CD4-positive, alpha-beta T cell (primary cell): ENCODE measurements at regions of chr19 and their contacts with region 1.

Region 1: DNA sequence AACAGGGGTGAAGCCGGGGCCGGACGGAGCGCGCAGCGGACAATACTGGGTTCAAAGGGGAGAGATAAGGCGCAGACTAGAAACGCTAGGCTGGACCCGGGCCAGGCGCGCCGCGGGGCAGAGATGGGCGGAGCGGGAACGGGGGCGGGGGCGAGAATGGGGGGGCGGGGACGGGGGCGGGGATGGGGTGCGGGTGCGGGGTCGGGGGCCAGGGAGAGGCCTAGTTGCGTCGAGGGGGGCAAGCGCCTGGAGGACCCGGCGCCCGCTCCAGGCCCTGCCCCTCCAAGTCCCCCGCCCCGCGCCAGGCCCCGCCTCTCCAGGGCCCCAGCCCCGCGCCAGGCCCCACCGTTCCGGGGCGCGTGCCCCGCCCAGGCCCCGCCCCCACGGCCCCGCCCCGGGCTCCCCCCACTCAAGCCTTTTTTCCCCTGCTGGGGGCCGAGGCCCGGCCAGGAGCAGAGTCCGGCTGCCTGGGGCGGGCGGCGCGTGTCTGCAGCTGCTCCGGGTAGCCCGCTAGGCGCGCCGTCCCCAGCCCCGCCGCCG is at the start of gene CERS4:
- DNase-seq: peak; percentile 54 to 92 (median 73)
- ATAC-seq: peak; percentile 83
- H3K4me3 ChIP-seq: peak within 1 kb of the TSS; percentile 95
- H3K4me3 Mint-ChIP-seq: peak within 1 kb of the TSS; percentile 93
- H3K27ac ChIP-seq: peak within 1 kb of the TSS; percentile 18 to 81
- H3K27ac Mint-ChIP-seq: peak within 1 kb of the TSS; percentile 90
- H3K4me1 ChIP-seq: peaks cover 39% of the 10 kb centered on the region
- H3K4me1 Mint-ChIP-seq: peaks cover 21% of the 10 kb centered on the region
- H3K27me3 ChIP-seq: no peaks in the 10 kb centered on the region
- H3K27me3 Mint-ChIP-seq: no peaks in the 10 kb centered on the region
- CTCF ChIP-seq: no peak
- total RNA-seq, gene CERS4: 8.7 to 12.3 TPM

Region 2: DNA sequence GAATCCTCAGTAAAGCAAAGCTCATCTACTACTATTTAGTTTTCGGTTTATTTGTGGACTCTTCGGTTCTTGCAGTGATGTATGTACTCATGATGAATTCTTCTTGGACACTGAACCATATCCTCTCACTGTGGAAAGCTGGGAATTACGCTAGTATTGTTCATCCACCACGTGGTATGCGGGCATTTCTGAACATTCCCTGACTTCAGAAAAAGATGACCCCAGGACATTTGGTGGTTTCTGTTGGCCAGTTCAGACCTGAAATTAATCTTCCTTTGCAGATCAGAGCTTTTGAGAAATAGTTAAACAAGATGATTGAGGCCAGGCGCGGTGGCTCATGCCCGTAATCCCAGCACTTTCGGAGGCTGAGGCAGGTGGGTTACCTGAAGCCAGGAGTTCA is 34.3 kb before region 1 on chr19:
- CTCF ChIA-PET with region 1: no interaction called
- POLR2A ChIA-PET with region 1: interaction called, 3 read pairs
- intact Hi-C with region 1: loop called in 1 of 2 experiments (anchors 5 kb)
- DNase-seq: no peak
- ATAC-seq: no peak
- H3K4me3 ChIP-seq: no peak overlapping the region
- H3K4me3 Mint-ChIP-seq: no peak overlapping the region
- H3K27ac ChIP-seq: no peak overlapping the region
- H3K27ac Mint-ChIP-seq: no peak overlapping the region
- H3K4me1 ChIP-seq: peaks cover 1% of the 10 kb centered on the region
- H3K4me1 Mint-ChIP-seq: no peaks in the 10 kb centered on the region
- H3K27me3 ChIP-seq: no peaks in the 10 kb centered on the region
- H3K27me3 Mint-ChIP-seq: no peaks in the 10 kb centered on the region
- CTCF ChIP-seq: no peak

Region 3: GRCh38 chr19:8180061-8180460 is 28.9 kb before region 1 on chr19:
- CTCF ChIA-PET with region 1: no interaction called
- POLR2A ChIA-PET with region 1: interaction called, 6 read pairs
- intact Hi-C with region 1: loop called (anchors 1 to 5 kb)
- DNase-seq: no peak
- ATAC-seq: no peak
- H3K4me3 ChIP-seq: no peak overlapping the region
- H3K4me3 Mint-ChIP-seq: no peak overlapping the region
- H3K27ac ChIP-seq: no peak overlapping the region
- H3K27ac Mint-ChIP-seq: no peak overlapping the region
- H3K4me1 ChIP-seq: peaks cover 26% of the 10 kb centered on the region
- H3K4me1 Mint-ChIP-seq: peaks cover 7% of the 10 kb centered on the region
- H3K27me3 ChIP-seq: no peaks in the 10 kb centered on the region
- H3K27me3 Mint-ChIP-seq: no peaks in the 10 kb centered on the region
- CTCF ChIP-seq: no peak

Region 4: GRCh38 chr19:8194528-8195267 is 14.3 kb before region 1 on chr19:
- CTCF ChIA-PET with region 1: no interaction called
- POLR2A ChIA-PET with region 1: interaction called, 16 read pairs
- intact Hi-C with region 1: no loop called
- DNase-seq: peak in 12 of 14 experiments; percentile 30 to 78 (median 45)
- ATAC-seq: peak; percentile 59
- H3K4me3 ChIP-seq: peak overlapping the region; percentile 20
- H3K4me3 Mint-ChIP-seq: peak overlapping the region; percentile 83
- H3K27ac ChIP-seq: peak overlapping the region; percentile 70 to 82
- H3K27ac Mint-ChIP-seq: peak overlapping the region; percentile 87
- H3K4me1 ChIP-seq: peaks cover 47% of the 10 kb centered on the region
- H3K4me1 Mint-ChIP-seq: peaks cover 50% of the 10 kb centered on the region
- H3K27me3 ChIP-seq: no peaks in the 10 kb centered on the region
- H3K27me3 Mint-ChIP-seq: no peaks in the 10 kb centered on the region
- CTCF ChIP-seq: no peak

Region 5: DNA sequence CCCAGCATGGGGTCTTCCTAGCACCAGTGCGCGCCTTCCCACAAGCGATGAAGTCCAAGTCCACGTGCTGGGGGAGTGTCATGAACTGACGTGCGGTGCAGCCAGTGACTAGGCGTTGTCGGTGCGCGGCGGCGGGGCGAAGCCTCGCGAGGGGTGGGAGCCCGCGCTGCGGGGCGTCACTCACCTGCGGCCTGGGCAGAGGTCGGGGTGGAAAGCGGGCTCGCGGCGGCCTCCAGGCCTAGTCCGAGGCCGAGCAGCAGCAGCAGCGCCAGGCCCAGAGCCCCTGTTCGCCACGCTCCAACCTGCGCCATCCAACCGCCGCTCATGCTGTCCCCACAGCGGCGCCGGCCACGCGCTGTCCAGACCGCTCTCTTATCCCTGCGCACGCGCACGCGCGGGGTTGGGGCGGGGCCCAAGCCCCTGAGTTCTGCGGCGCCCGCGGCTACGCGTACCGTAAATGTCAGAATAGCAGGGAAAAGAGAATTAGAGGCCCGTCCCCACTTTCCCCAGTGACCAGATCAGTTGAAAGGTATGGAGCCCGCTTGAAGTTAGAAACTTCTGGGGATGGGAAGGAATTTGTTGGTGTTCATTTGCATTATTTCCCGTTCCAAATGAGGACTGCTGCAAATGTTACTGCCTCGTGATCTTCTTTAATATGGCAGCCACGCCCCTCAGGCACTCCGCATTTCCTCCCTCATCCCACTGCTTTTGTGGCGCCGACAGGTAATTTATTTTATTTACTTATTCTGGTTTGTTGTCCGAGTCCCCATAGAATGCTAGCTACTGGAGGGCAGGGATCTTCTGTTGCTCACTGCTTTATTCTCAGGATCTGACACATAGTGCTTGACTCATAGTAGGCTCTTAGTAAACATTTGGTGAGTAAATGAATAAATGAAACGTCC is 99.2 kb after region 1 on chr19 and contains the start of gene CD320:
- CTCF ChIA-PET with region 1: no interaction called
- POLR2A ChIA-PET with region 1: no interaction called
- intact Hi-C with region 1: loop called in 1 of 2 experiments (anchors 5 kb)
- DNase-seq: peak; percentile 66 to 92 (median 81)
- ATAC-seq: peak; percentile 83
- H3K4me3 ChIP-seq: peak within 1 kb of the TSS; percentile 67
- H3K4me3 Mint-ChIP-seq: peak within 1 kb of the TSS; percentile 93
- H3K27ac ChIP-seq: peak within 1 kb of the TSS; percentile 52 to 72
- H3K27ac Mint-ChIP-seq: peak within 1 kb of the TSS; percentile 83
- H3K4me1 ChIP-seq: peaks cover 47% of the 10 kb centered on the region
- H3K4me1 Mint-ChIP-seq: peaks cover 39% of the 10 kb centered on the region
- H3K27me3 ChIP-seq: no peaks in the 10 kb centered on the region
- H3K27me3 Mint-ChIP-seq: no peaks in the 10 kb centered on the region
- CTCF ChIP-seq: no peak
- total RNA-seq, gene CD320: 17.1 to 17.6 TPM